ENCODE measurements at regions of chr11 and their contacts with region 1.

Region 1: DNA sequence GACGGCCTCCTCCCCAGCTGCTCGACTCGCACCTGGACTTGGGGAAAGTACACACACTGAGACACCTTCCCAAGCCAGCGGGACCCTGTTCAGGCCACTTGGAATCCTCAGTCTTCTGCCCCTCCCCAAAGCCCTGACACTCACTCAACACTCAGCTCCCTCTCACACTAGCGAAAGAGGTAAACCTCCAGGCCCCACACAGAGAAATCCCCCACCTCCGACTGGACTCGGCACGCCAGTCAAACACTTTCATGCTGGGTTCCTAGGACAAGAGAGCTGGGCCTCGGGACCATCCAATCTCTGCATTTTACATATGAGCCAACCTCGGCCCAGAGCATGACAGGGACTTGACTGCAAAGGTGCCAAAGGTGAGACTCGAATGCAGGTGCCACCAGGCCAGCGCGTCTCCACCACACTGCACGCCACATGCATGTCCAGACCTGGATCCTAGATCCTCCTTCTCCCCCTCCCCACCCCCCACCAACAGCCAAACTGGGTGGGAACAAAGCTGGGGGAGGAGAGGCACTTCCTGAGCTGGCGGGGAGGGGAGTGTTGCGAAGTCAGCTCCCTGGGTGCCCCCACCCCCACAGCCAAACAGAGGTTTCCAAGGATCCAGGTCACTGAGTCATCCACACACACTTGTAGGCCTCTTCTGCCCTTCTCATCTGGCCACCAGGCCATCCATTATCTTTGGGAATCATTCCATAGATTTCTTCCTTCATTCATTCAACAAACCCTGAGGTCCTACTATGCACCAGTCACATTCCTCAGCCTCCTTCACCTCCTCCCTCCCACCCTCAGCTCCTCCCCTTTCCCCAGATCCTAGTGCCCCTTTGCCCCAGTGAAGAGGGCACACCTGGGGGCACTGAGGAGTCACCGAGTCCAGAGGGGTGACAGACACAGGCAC is 10.7 kb upstream of the CD5 start:
- DNase-seq: peak in 1 of 5 donors; percentile 74
- H3K4me3 ChIP-seq: peak overlapping the region in 1 of 2 donors; percentile 16
- H3K4me3 Mint-ChIP-seq: peak overlapping the region; percentile 71 to 89 (median 80)
- H3K27ac ChIP-seq: peak overlapping the region; percentile 87
- H3K27ac Mint-ChIP-seq: peak overlapping the region; percentile 95 to 99 (median 97)
- H3K4me1 ChIP-seq: peaks cover 52% of the 10 kb centered on the region
- H3K4me1 Mint-ChIP-seq: peaks cover 44 to 75% (median 50%) of the 10 kb centered on the region in 4 donors
- H3K27me3 ChIP-seq: no peaks in the 10 kb centered on the region
- H3K27me3 Mint-ChIP-seq: no peaks in the 10 kb centered on the region

Region 2: GRCh38 chr11:60978546-60979380 is 112.9 kb before region 1 on chr11:
- CTCF ChIA-PET with region 1: interaction called, 3 read pairs
- POLR2A ChIA-PET with region 1: interaction called, 10 read pairs
- intact Hi-C with region 1: no loop called
- DNase-seq: peak; percentile 49 to 82 (median 52)
- H3K4me3 ChIP-seq: peak overlapping the region in 1 of 2 donors; percentile 28
- H3K4me3 Mint-ChIP-seq: peak overlapping the region; percentile 81 to 98 (median 86)
- H3K27ac ChIP-seq: peak overlapping the region; percentile 92
- H3K27ac Mint-ChIP-seq: peak overlapping the region; percentile 88 to 100 (median 97)
- H3K4me1 ChIP-seq: peaks cover 91% of the 10 kb centered on the region
- H3K4me1 Mint-ChIP-seq: peaks cover 55 to 98% (median 77%) of the 10 kb centered on the region in 4 donors
- H3K27me3 ChIP-seq: no peaks in the 10 kb centered on the region
- H3K27me3 Mint-ChIP-seq: no peaks in the 10 kb centered on the region

Region 3: DNA sequence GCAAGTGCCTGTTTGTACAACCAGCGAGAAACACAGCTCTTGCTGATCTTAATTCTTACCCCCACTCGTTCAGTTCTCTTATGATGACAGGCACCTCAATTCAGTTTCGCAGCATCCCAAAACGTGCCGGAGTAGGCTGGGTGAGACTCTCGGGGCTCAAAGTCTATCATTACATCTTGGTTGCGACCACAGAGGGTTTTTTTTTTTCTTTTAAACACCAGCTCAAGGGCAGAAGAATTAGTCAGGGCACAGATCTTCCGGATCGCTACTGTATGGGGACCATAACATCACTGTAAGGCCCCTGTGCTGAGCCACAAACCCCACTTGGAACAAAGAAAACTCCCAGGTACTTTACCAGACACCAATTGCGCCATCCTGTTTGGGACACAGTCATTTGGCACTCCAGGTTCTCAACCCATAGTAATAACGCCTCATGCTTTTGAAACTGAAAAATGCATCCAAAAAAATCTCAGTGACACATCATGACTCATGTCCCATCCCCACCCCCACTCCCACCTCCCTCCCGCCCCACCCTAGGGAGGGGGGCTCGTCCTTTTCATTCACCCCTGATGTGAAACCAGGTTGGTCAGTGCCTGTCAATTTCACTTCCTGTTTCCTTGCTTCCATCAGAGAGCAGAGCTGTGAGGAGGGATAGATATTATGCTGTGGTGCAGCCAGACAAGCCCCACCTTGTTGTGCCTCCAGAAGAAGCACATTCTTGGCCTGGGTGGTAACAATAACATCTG is 30.4 kb before region 1 on chr11:
- CTCF ChIA-PET with region 1: no interaction called
- POLR2A ChIA-PET with region 1: interaction called, 11 read pairs
- intact Hi-C with region 1: no loop called
- DNase-seq: peak; percentile 60 to 97 (median 65)
- H3K4me3 ChIP-seq: peak overlapping the region; percentile 17 to 48
- H3K4me3 Mint-ChIP-seq: peak overlapping the region; percentile 72 to 93 (median 86)
- H3K27ac ChIP-seq: peak overlapping the region; percentile 69
- H3K27ac Mint-ChIP-seq: peak overlapping the region; percentile 94 to 99 (median 97)
- H3K4me1 ChIP-seq: peaks cover 75% of the 10 kb centered on the region
- H3K4me1 Mint-ChIP-seq: peaks cover 59 to 91% (median 66%) of the 10 kb centered on the region in 4 donors
- H3K27me3 ChIP-seq: no peaks in the 10 kb centered on the region
- H3K27me3 Mint-ChIP-seq: no peaks in the 10 kb centered on the region

Region 4: DNA sequence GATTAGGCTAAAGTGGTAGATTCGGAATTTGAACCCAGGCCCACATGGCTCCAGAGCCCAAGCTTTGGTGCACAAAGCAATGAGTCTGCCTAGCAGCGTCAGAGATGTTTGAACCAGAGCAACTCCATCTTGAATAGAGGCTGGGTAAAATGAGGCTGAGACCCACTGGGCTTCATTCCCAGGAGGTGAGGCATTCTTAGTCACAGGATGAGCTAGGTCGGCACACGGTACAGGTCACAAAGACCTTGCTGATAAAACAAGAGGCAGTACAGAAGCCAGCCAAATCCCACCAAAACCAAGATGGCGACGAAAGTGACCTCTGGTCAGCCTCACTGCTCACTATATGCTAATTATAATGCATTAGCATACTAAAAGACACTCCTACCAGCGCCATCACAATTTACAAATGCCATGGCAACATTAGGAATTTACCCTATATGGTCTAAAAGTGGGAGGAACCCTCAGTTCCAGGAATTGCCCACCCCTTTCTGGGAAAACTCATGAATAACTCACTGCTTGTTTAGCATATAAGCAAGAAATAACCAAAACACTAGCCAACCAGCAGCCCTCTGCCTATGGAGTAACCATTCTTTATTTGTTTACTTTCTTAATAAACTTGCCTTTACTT is 548.3 kb after region 1 on chr11:
- CTCF ChIA-PET with region 1: no interaction called
- POLR2A ChIA-PET with region 1: no interaction called
- intact Hi-C with region 1: no loop called
- DNase-seq: no peak
- H3K4me3 ChIP-seq: no peak overlapping the region
- H3K4me3 Mint-ChIP-seq: no peak overlapping the region
- H3K27ac ChIP-seq: no peak overlapping the region
- H3K27ac Mint-ChIP-seq: no peak overlapping the region
- H3K4me1 ChIP-seq: no peaks in the 10 kb centered on the region
- H3K4me1 Mint-ChIP-seq: no peaks in the 10 kb centered on the region
- H3K27me3 ChIP-seq: no peaks in the 10 kb centered on the region
- H3K27me3 Mint-ChIP-seq: peaks cover 1 to 13% of the 10 kb centered on the region in 2 donors